ENCODE measurements at regions of chr1 and their contacts with region 1.

Region 1: GRCh38 chr1:236156512-236157208 is 14.3 kb downstream of the GPR137B start:
- DNase-seq: no peak
- H3K4me3 Mint-ChIP-seq: no peak overlapping the region
- H3K27ac Mint-ChIP-seq: no peak overlapping the region
- H3K4me1 Mint-ChIP-seq: peaks cover 7% of the 10 kb centered on the region
- H3K27me3 Mint-ChIP-seq: no peaks in the 10 kb centered on the region

Region 2: GRCh38 chr1:236247286-236247685 is 90.6 kb after region 1 on chr1:
- intact Hi-C with region 1: no loop called
- DNase-seq: no peak
- H3K4me3 Mint-ChIP-seq: no peak overlapping the region
- H3K27ac Mint-ChIP-seq: no peak overlapping the region
- H3K4me1 Mint-ChIP-seq: no peaks in the 10 kb centered on the region
- H3K27me3 Mint-ChIP-seq: no peaks in the 10 kb centered on the region

Region 3: DNA sequence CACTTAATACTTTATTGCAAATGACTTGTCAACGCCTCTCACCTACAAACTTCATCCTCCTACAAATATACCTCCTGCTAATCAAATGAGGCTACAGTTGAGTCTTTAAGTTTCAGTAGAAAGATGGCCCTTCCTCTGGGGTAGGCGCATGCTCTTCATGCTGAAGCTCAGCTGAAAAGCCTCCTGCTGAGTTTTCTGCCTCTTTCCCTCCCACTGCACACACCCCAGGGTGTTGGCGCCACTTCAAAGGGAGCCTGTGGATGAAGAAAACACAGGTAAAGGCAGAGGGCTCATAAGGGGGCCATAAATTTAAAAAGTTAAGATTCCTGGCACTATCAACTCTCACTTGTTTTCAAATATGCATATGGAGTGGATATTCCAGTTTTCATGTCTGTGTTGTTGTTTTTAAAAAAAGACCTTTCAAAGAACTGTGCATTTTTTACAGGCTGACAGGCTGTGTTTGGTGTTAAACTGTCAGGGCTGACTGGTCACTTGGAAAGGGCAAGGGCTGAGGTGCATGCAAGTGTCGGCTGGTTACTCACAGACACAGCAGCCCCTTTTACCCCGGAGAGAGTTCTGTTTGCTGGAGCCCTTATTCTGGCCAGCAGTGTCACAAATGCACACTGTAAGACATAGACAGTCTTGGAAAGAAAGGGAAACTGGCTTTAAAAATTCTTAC is 324.2 kb after region 1 on chr1:
- intact Hi-C with region 1: no loop called
- DNase-seq: no peak
- H3K4me3 Mint-ChIP-seq: no peak overlapping the region
- H3K27ac Mint-ChIP-seq: no peak overlapping the region
- H3K4me1 Mint-ChIP-seq: peaks cover under 1% of the 10 kb centered on the region
- H3K27me3 Mint-ChIP-seq: no peaks in the 10 kb centered on the region

Region 4: GRCh38 chr1:236759252-236759859 is 602.7 kb after region 1 on chr1:
- intact Hi-C with region 1: no loop called
- DNase-seq: no peak
- H3K4me3 Mint-ChIP-seq: no peak overlapping the region
- H3K27ac Mint-ChIP-seq: no peak overlapping the region
- H3K4me1 Mint-ChIP-seq: peaks cover 5% of the 10 kb centered on the region
- H3K27me3 Mint-ChIP-seq: no peaks in the 10 kb centered on the region

Region 5: GRCh38 chr1:236774926-236775325 is 618.3 kb after region 1 on chr1:
- intact Hi-C with region 1: loop called (anchors 5 kb)
- DNase-seq: no peak
- H3K4me3 Mint-ChIP-seq: no peak overlapping the region
- H3K27ac Mint-ChIP-seq: no peak overlapping the region
- H3K4me1 Mint-ChIP-seq: no peaks in the 10 kb centered on the region
- H3K27me3 Mint-ChIP-seq: peaks cover 18% of the 10 kb centered on the region